Activated CD4-positive, alpha-beta T cell treated with anti-CD3 and anti-CD28 coated beads, Interleukin-2, amount 10 ng/mL, durations not matched to agents 24 days and 14 days (primary cell): ENCODE measurements at regions of chr1 and their contacts with region 1.

Region 1: GRCh38 chr1:220776720-220777326 is 9.9 kb upstream of the MTARC1 start:
- DNase-seq: peak; percentile 88
- H3K4me3 Mint-ChIP-seq: no peak overlapping the region
- H3K27ac Mint-ChIP-seq: no peak overlapping the region
- H3K4me1 Mint-ChIP-seq: no peaks in the 10 kb centered on the region
- H3K27me3 Mint-ChIP-seq: peaks cover 5% of the 10 kb centered on the region

Region 2: GRCh38 chr1:220189750-220190347 is 587.0 kb before region 1 on chr1:
- intact Hi-C with region 1: loop called (anchors 5 kb)
- DNase-seq: no peak
- H3K4me3 Mint-ChIP-seq: no peak overlapping the region
- H3K27ac Mint-ChIP-seq: no peak overlapping the region
- H3K4me1 Mint-ChIP-seq: no peaks in the 10 kb centered on the region
- H3K27me3 Mint-ChIP-seq: no peaks in the 10 kb centered on the region

Region 3: DNA sequence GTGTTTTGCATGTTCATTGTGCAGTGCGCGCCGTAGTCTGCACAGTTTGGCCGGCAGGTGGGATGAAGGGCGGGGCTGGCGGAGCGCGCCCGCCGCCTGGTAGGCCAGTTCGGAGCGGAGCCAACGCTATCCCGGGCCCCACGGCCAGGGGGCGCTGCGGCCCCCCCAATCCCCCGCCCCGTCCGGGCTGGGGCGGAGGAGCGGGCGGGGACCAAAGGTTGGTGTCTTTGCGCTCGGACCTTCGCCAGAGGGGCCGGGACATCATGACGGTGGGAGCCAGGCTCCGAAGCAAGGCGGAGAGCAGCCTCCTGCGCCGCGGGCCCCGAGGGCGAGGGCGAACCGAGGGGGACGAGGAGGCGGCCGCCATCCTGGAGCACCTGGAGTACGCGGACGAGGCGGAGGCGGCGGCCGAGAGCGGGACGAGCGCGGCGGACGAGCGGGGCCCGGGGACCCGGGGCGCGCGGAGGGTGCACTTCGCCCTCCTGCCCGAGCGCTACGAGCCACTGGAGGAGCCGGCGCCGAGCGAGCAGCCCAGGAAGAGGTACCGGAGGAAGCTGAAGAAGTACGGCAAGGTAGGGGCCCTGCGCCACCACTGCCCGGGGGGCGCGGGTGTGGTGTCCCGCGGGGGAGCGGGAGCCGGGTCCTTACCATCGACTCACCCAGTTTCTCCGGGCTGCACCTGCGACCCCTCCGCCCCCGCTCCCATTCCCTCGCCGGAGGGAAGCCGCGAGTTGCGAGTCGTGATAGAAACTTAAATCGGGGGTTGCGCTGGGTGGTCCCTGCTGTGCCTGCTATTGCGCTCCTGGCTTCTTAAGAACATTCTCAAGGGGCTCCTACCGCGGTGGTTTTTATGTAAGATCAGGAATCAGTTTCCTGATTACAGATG is 86.4 kb before region 1 on chr1 and contains the start of gene C1orf115:
- intact Hi-C with region 1: loop called (anchors 1 kb)
- DNase-seq: peak; percentile 92
- H3K4me3 Mint-ChIP-seq: peak within 1 kb of the TSS; percentile 86
- H3K27ac Mint-ChIP-seq: peak within 1 kb of the TSS; percentile 23
- H3K4me1 Mint-ChIP-seq: peaks cover 6% of the 10 kb centered on the region
- H3K27me3 Mint-ChIP-seq: peaks cover 23% of the 10 kb centered on the region
- total RNA-seq, gene C1orf115: 0.05 TPM in 1 of 2 replicates, not detected in the other